ENCODE measurements at regions of chr15 and their contacts with region 1.

Region 1: DNA sequence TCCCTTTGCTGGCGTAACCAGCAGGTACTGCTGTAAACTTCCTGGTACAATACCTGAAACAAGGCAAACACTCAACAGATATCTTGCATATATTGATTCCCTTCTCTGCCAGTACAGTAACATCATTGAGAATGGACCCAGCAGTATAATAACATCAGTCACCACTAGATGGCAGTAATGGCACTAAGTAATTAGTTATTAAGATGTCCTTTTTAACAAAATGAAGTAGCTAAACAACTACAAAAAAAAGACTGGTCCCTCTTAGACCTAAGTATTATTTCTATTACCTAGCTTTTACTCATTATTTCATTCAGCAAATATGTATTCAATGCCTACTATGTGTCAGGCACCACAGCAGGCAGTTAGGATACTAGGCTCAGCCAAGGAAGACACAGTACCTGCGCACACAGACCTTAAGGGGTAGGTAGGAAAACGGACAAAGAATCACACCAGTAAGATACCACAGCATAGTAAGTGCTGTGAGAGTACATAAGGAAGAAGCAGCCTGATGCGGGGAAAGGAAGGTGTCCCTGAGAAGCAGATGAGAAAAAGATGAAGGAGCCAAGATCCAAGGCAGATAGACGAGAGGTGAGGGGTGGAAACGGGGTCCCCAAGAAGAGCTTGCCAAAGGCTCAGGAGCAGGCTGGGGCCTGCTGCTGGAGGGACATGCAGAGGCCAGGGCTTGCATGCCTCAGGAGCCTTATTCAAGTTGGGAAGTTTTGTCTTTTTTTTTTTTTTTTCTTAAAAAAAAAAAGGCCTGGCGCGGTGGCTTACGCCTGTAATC is 102.8 kb upstream of the CHD2 start:
- DNase-seq: peak; percentile 62
- H3K4me3 ChIP-seq: no peak overlapping the region
- H3K27ac ChIP-seq: peak overlapping the region in 1 of 2 experiments; percentile 27; a peak in 1 of 4 replicates
- H3K4me1 ChIP-seq: no peaks in the 10 kb centered on the region
- H3K27me3 ChIP-seq: no peaks in the 10 kb centered on the region
- CTCF ChIP-seq: peak; percentile 80
- EP300 ChIP-seq: no peak
- RAD21 ChIP-seq: peak; percentile 80

Region 2: DNA sequence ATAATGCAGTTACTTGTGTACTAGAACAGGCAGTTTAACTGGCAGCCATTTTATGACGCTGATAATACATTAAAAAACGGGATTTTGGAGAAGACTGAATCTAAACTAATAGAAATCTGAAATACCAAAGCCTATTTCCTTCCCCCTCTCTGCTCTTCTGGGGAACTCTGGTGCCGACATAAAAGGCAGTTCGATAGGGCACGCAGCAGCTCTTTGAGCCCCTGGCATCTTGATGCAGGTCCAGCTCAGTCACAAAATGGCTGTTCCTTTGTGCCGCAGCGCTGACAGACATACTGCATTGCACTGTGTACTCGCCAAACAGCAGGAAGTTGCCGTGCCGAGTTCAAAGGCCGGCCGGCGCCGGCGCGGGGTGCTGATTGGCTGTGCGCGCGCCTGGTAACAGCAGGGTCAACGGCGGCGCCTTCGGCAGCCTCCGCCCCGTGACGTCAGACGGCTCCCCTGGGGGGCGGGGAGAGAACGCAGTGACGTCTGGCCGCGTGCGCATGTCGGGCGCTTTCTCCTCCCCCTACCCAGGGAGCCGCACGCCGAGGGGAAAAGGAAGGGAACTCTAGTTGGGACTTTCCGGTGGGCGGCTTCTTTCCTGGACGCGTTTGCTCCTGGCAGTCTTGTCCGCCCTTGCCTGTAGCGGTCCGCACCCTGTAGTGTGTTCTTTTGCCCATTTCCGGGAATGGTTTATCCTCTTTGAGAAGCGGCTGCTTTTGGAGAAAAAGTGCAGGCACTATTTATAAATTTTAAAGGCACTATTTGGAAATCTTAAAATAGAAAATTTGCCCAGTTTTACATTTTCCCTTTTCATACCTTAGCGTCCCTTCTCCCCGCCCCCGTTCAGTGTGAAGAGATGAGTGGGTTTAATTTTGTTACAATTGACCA is 106.8 kb after region 1 on chr15:
- CTCF ChIA-PET with region 1: interaction called, 26 read pairs
- POLR2A ChIA-PET with region 1: no interaction called
- DNase-seq: peak; percentile 94
- H3K4me3 ChIP-seq: peak overlapping the region; percentile 77 to 86
- H3K27ac ChIP-seq: peak overlapping the region; percentile 99 to 100
- H3K4me1 ChIP-seq: peaks cover 25 to 32% of the 10 kb centered on the region in 2 experiments
- H3K27me3 ChIP-seq: no peaks in the 10 kb centered on the region
- CTCF ChIP-seq: no peak
- EP300 ChIP-seq: peak in 1 of 2 experiments; percentile 73; a peak in 2 of 4 replicates
- RAD21 ChIP-seq: no peak

Region 3: GRCh38 chr15:92917606-92918407 is 120.4 kb after region 1 on chr15:
- CTCF ChIA-PET with region 1: interaction called, 78 read pairs
- POLR2A ChIA-PET with region 1: no interaction called
- DNase-seq: peak; percentile 76
- H3K4me3 ChIP-seq: no peak overlapping the region; a peak in 1 of 4 replicates
- H3K27ac ChIP-seq: peak overlapping the region; percentile 88 to 90
- H3K4me1 ChIP-seq: peaks cover 9 to 41% of the 10 kb centered on the region in 2 experiments
- H3K27me3 ChIP-seq: no peaks in the 10 kb centered on the region
- CTCF ChIP-seq: peak; percentile 94
- EP300 ChIP-seq: 0 out of 4 replicates have a peak, but pooled peaks of 1 of the 2 experiments have one; percentile 1
- RAD21 ChIP-seq: peak; percentile 84

Region 4: GRCh38 chr15:92924216-92924615 is 126.9 kb after region 1 on chr15:
- CTCF ChIA-PET with region 1: interaction called, 78 read pairs
- POLR2A ChIA-PET with region 1: no interaction called
- DNase-seq: no peak
- H3K4me3 ChIP-seq: no peak overlapping the region
- H3K27ac ChIP-seq: no peak overlapping the region
- H3K4me1 ChIP-seq: peaks cover 9 to 26% of the 10 kb centered on the region in 2 experiments; a peak in 3 of 4 replicates
- H3K27me3 ChIP-seq: no peaks in the 10 kb centered on the region
- CTCF ChIP-seq: no peak
- EP300 ChIP-seq: no peak
- RAD21 ChIP-seq: no peak